ENCODE measurements at regions of chr3 and their contacts with region 1.

Region 1: GRCh38 chr3:181726351-181727330 is 14.9 kb downstream of the SOX2 start:
- DNase-seq: no peak
- H3K4me3 Mint-ChIP-seq: peak overlapping the region; percentile 71
- H3K27ac Mint-ChIP-seq: peak overlapping the region; percentile 65
- H3K4me1 Mint-ChIP-seq: peaks cover 2% of the 10 kb centered on the region
- H3K27me3 Mint-ChIP-seq: peaks cover 89% of the 10 kb centered on the region

Region 2: DNA sequence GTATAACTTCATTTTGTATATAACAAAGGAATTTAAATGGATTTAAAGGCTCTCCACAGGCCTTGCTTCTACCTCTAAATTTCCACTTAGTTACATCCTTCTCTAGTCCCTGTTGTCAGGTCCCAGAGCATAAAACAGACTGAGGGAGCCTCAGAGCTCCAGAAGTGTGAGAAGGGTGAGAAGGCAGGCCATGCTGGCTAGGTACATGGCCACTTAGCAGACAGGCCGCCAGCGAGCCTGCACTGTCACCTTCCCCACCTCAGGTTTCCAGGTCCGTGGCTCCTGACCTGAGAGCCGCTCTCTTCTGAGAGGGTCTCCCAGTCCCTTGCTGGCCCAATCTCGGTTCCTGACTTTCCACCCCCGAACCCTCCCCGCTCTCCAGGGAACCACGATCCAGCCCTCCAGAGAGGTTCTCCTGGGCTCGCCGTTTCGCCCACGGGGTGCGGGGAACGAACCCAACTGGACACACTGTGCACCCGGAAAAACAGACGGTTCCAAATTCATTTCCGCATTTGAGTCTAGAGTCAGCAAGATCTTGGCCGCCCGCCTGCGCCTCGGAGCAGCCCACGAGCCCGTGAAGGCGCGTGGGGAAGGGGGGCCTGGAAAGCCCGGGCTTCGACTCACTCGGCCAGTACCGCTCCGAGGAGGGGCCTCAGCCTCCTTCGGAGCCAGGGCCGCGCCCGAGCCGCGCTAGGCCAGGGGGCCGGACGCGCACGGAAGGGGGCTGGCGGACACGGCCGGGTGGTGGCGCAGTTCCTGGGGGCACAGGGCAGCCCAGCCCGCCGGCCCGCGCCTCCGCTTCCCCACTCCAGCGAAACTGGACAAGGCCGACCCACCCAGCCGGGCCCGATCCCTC is 31.6 kb before region 1 on chr3:
- intact Hi-C with region 1: loop called (anchors 5 kb)
- DNase-seq: peak; percentile 54
- H3K4me3 Mint-ChIP-seq: no peak overlapping the region
- H3K27ac Mint-ChIP-seq: no peak overlapping the region
- H3K4me1 Mint-ChIP-seq: peaks cover 2% of the 10 kb centered on the region
- H3K27me3 Mint-ChIP-seq: peaks cover 61% of the 10 kb centered on the region

Region 3: GRCh38 chr3:181700168-181701087 is 26.2 kb before region 1 on chr3:
- intact Hi-C with region 1: loop called (anchors 1 kb)
- DNase-seq: peak; percentile 88
- H3K4me3 Mint-ChIP-seq: peak overlapping the region; percentile 79
- H3K27ac Mint-ChIP-seq: peak overlapping the region; percentile 58
- H3K4me1 Mint-ChIP-seq: peaks cover 20% of the 10 kb centered on the region
- H3K27me3 Mint-ChIP-seq: peaks cover 88% of the 10 kb centered on the region

Region 4: DNA sequence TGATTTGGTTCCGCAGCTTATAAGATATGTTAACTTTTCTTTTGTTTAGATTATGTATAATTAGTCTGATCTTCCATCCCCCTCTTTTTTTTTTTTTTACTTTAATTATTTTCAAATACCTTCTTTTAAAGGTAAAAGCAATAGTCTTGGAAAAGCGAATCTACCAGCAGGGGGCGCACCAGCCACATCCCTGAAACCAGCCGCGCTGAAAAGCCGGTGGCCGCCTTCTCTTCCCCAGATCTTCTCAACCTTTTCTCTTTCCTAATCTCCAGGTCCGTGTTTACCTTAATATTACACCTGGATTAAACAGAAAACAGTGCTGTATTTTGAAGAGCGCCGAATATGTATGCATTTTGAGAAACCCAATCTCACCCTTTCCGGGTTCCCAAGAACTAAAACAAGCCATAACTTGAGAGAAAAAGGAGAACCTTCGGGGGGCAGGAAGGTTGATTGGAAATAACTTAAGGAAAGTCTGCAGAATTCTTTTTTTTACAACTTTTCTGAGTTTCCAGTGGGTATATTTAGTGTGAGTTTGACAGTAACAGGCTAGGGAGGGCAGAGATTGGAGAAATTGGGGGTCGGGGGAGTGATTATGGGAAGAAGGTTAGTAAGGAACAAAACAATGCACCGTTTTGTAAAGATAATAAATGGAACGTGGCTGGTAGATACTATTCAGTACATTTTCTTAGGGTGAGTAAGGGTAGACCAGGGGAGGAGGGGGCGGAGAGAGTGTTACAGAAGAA is 16.9 kb before region 1 on chr3:
- intact Hi-C with region 1: loop called (anchors 1 kb)
- DNase-seq: peak; percentile 89
- H3K4me3 Mint-ChIP-seq: peak overlapping the region; percentile 27
- H3K27ac Mint-ChIP-seq: peak overlapping the region; percentile 72
- H3K4me1 Mint-ChIP-seq: peaks cover 7% of the 10 kb centered on the region
- H3K27me3 Mint-ChIP-seq: peaks cover 61% of the 10 kb centered on the region

Region 5: DNA sequence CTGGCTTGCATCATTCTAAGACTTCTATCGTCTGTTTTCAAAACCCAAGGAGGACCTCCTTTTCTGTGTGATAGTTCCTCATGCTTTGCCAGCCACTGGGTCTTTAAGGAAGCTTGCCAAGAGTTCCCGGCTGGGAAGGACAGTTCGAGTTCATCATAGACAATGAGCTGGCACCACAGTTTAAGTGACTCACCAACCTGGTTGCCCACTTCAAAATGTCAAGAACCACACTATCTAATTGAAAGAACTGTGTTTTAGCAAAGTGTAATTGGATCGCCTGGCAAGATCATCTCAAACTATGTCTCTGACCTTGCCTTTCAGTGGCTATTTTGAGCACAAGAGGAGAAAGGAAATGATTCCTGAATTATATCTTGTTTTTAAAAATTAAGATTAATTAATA is 13.0 kb after region 1 on chr3:
- intact Hi-C with region 1: no loop called
- DNase-seq: no peak
- H3K4me3 Mint-ChIP-seq: no peak overlapping the region
- H3K27ac Mint-ChIP-seq: no peak overlapping the region
- H3K4me1 Mint-ChIP-seq: no peaks in the 10 kb centered on the region
- H3K27me3 Mint-ChIP-seq: no peaks in the 10 kb centered on the region

Region 6: GRCh38 chr3:181782301-181782954 is 55.8 kb after region 1 on chr3:
- intact Hi-C with region 1: no loop called
- DNase-seq: no peak
- H3K4me3 Mint-ChIP-seq: no peak overlapping the region
- H3K27ac Mint-ChIP-seq: no peak overlapping the region
- H3K4me1 Mint-ChIP-seq: no peaks in the 10 kb centered on the region
- H3K27me3 Mint-ChIP-seq: no peaks in the 10 kb centered on the region

Region 7: DNA sequence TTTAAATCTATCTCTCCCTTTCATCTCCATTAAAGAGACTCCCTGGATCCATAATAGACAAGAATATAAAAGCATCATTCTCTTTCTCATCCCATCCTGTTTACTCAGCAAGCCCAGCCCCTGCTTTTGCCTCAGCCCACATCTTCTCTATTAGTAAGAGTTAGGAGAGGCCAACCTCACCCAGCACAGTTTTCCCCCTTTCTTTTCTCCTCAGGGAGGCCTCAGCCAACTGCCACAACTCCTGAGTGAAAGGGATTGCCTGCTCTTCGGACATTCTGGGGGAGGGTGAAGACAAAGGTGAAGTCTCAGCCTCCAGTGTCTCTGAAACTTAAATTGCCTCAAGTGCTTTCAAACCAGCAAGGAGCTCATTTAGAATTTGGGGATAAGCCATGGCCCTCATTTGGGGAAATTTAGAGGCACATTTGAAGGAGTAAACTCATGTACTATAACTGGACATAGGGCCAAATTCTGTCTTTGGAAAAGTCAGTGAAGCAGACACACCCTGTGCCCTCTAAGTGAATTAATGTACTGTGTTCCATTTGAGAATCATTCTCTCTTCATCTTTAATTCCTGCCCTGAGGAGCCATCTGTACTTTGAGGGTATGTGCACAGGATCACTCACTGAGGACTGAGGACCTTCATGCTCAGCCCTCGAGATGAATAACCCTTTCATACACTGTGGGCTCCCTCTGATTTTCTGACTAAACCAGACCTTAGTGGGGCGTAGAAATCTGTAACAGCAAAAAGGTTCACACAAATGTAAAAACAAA is 67.6 kb after region 1 on chr3:
- intact Hi-C with region 1: no loop called
- DNase-seq: no peak
- H3K4me3 Mint-ChIP-seq: no peak overlapping the region
- H3K27ac Mint-ChIP-seq: no peak overlapping the region
- H3K4me1 Mint-ChIP-seq: no peaks in the 10 kb centered on the region
- H3K27me3 Mint-ChIP-seq: no peaks in the 10 kb centered on the region

Measured in activated CD4-positive, alpha-beta T cell treated with anti-CD3 and anti-CD28 coated beads, Interleukin-2, amount 10 ng/mL, durations not matched to agents 24 days and 14 days (primary cell).